ENCODE measurements at regions of chr15 and their contacts with region 1.

Region 1: GRCh38 chr15:31435261-31435911 is 108.8 kb downstream of the KLF13 start:
- DNase-seq: peak; percentile 87
- ATAC-seq: peak; percentile 76
- H3K4me3 ChIP-seq: peak overlapping the region; percentile 21 to 67 (median 41)
- H3K4me3 Mint-ChIP-seq: peak overlapping the region; percentile 85
- H3K27ac ChIP-seq: peak overlapping the region; percentile 52 to 86
- H3K27ac Mint-ChIP-seq: peak overlapping the region; percentile 91
- H3K4me1 ChIP-seq: peaks cover 48 to 52% of the 10 kb centered on the region in 2 donors
- H3K4me1 Mint-ChIP-seq: peaks cover 60% of the 10 kb centered on the region
- H3K27me3 ChIP-seq: no peaks in the 10 kb centered on the region
- H3K27me3 Mint-ChIP-seq: no peaks in the 10 kb centered on the region
- CTCF ChIP-seq: peak; percentile 71

Region 2: GRCh38 chr15:30991255-30992072 is 443.9 kb before region 1 on chr15 and contains the start of gene MTMR10:
- CTCF ChIA-PET with region 1: no interaction called
- POLR2A ChIA-PET with region 1: no interaction called
- intact Hi-C with region 1: loop called (anchors 5 kb)
- DNase-seq: peak; percentile 90
- ATAC-seq: peak; percentile 92
- H3K4me3 ChIP-seq: peak within 1 kb of the TSS; percentile 77 to 96 (median 85)
- H3K4me3 Mint-ChIP-seq: peak within 1 kb of the TSS; percentile 95
- H3K27ac ChIP-seq: peak within 1 kb of the TSS; percentile 81 to 94
- H3K27ac Mint-ChIP-seq: peak within 1 kb of the TSS; percentile 97
- H3K4me1 ChIP-seq: peaks cover 21 to 31% of the 10 kb centered on the region in 2 donors
- H3K4me1 Mint-ChIP-seq: peaks cover 31% of the 10 kb centered on the region
- H3K27me3 ChIP-seq: no peaks in the 10 kb centered on the region
- H3K27me3 Mint-ChIP-seq: no peaks in the 10 kb centered on the region
- CTCF ChIP-seq: no peak
- total RNA-seq, gene MTMR10: 50.2 and 53.2 TPM in 2 replicates

Region 3: DNA sequence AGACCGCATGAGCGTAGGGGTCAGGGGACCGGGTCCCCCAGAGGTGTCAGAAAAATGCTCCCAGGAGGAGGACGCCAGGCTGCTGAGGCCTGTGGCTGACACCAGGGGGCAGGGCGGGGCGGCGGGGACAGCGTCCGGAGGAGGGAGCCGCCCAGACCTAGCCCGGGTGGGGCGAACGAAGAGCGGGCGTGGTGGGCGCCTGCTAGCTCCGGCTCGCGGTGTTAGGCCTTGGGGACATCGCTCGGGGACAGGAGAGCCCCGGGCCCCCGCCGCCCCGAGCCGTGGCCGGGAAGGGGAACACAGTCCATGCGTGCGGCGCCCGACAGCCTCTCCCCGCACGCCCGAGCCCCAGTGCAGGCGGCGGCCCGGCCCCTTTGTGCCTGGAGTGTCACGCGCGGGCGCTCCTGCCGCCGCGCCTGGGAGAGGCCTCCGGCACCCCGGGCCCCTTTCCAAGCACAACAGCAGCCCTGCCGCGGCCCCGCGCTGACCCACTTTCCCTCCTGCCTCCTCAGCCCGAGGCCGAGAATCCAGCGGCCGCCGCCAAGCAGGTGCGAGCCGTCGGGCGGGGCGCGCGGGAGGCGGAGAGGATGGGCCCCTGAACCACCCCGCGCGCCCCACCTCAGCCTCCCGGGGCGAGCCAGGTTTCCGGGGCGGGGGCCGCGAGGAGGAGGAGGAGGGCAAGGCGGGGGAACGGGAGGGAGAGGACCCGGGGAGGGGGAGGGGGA is 219.7 kb before region 1 on chr15:
- CTCF ChIA-PET with region 1: interaction called, 74 read pairs
- POLR2A ChIA-PET with region 1: interaction called, 11 read pairs
- intact Hi-C with region 1: loop called (anchors 1 kb)
- DNase-seq: peak; percentile 90
- ATAC-seq: peak; percentile 82
- H3K4me3 ChIP-seq: peak overlapping the region in 4 of 5 experiments; percentile 35 to 72 (median 66)
- H3K4me3 Mint-ChIP-seq: peak overlapping the region; percentile 87
- H3K27ac ChIP-seq: peak overlapping the region; percentile 66 to 79
- H3K27ac Mint-ChIP-seq: peak overlapping the region; percentile 87
- H3K4me1 ChIP-seq: peaks cover 14 to 25% of the 10 kb centered on the region in 2 donors
- H3K4me1 Mint-ChIP-seq: peaks cover 23% of the 10 kb centered on the region
- H3K27me3 ChIP-seq: no peaks in the 10 kb centered on the region
- H3K27me3 Mint-ChIP-seq: no peaks in the 10 kb centered on the region
- CTCF ChIP-seq: peak; percentile 96

Region 4: DNA sequence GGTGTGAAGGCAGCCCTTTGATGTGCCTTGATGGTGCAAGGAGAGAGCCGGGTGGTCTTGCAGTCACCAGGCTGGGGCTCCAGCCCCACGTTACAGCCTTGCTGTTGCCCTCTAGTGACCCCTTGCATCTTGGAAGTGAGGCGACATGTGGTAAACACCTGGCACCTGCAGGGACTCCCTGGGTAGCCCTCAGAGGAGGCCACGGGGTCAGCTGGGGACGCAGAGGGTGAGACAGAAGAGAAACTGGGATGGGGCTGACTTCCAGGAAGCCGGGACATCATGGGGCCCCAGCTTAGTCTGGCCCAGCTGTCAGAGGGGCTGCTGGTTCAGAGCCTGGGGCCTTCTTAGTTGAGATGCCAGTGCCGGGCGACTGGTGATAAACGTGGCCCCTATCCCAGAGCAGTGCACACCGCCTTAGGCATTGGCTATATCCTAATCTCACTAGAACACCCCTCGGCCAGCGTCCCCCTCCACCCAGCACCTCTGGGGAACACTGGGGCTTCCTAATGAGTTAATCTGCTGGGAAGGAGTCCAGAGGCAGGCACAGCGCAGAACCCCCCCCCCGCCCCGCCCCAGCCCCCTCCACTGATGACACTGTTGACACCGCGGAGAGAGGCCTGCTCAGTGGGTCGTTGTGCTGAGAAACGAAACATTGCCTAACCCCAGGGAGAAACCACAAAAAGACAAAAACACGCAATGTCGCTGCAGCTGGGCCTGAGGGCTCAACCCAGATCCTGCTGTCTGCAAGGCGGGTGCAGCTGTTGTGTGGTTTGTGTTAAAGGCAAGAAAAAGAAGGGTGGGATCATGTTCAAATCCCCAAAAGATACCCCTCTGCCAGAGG is 169.3 kb before region 1 on chr15:
- CTCF ChIA-PET with region 1: interaction called, 52 read pairs
- POLR2A ChIA-PET with region 1: interaction called, 3 read pairs
- intact Hi-C with region 1: loop called (anchors 1 kb)
- DNase-seq: peak; percentile 80
- ATAC-seq: peak; percentile 64
- H3K4me3 ChIP-seq: peak overlapping the region in 4 of 5 experiments; percentile 2 to 37 (median 4)
- H3K4me3 Mint-ChIP-seq: peak overlapping the region; percentile 79
- H3K27ac ChIP-seq: peak overlapping the region; percentile 78 to 90
- H3K27ac Mint-ChIP-seq: peak overlapping the region; percentile 96
- H3K4me1 ChIP-seq: peaks cover 70 to 79% of the 10 kb centered on the region in 2 donors
- H3K4me1 Mint-ChIP-seq: peaks cover 79% of the 10 kb centered on the region
- H3K27me3 ChIP-seq: no peaks in the 10 kb centered on the region
- H3K27me3 Mint-ChIP-seq: no peaks in the 10 kb centered on the region
- CTCF ChIP-seq: no peak

Region 5: GRCh38 chr15:31344823-31345605 is 90.4 kb before region 1 on chr15:
- CTCF ChIA-PET with region 1: interaction called, 19 read pairs
- POLR2A ChIA-PET with region 1: no interaction called
- intact Hi-C with region 1: loop called (anchors 2 kb)
- DNase-seq: no peak
- ATAC-seq: peak; percentile 62
- H3K4me3 ChIP-seq: peak overlapping the region in 4 of 5 experiments; percentile 42 to 70 (median 58)
- H3K4me3 Mint-ChIP-seq: peak overlapping the region; percentile 95
- H3K27ac ChIP-seq: peak overlapping the region; percentile 90 to 97
- H3K27ac Mint-ChIP-seq: peak overlapping the region; percentile 99
- H3K4me1 ChIP-seq: peaks cover 100% of the 10 kb centered on the region in 2 donors
- H3K4me1 Mint-ChIP-seq: peaks cover 99% of the 10 kb centered on the region
- H3K27me3 ChIP-seq: no peaks in the 10 kb centered on the region
- H3K27me3 Mint-ChIP-seq: no peaks in the 10 kb centered on the region
- CTCF ChIP-seq: no peak

Region 6: GRCh38 chr15:31365655-31366127 is 69.7 kb before region 1 on chr15:
- CTCF ChIA-PET with region 1: interaction called, 133 read pairs
- POLR2A ChIA-PET with region 1: interaction called, 8 read pairs
- intact Hi-C with region 1: loop called (anchors 2 kb)
- DNase-seq: peak; percentile 79
- ATAC-seq: peak; percentile 31
- H3K4me3 ChIP-seq: peak overlapping the region in 4 of 5 experiments; percentile 5 to 33 (median 15)
- H3K4me3 Mint-ChIP-seq: peak overlapping the region; percentile 80
- H3K27ac ChIP-seq: no peak overlapping the region
- H3K27ac Mint-ChIP-seq: peak overlapping the region; percentile 93
- H3K4me1 ChIP-seq: peaks cover 85 to 87% of the 10 kb centered on the region in 2 donors
- H3K4me1 Mint-ChIP-seq: peaks cover 95% of the 10 kb centered on the region
- H3K27me3 ChIP-seq: no peaks in the 10 kb centered on the region
- H3K27me3 Mint-ChIP-seq: no peaks in the 10 kb centered on the region
- CTCF ChIP-seq: peak; percentile 59

Region 7: DNA sequence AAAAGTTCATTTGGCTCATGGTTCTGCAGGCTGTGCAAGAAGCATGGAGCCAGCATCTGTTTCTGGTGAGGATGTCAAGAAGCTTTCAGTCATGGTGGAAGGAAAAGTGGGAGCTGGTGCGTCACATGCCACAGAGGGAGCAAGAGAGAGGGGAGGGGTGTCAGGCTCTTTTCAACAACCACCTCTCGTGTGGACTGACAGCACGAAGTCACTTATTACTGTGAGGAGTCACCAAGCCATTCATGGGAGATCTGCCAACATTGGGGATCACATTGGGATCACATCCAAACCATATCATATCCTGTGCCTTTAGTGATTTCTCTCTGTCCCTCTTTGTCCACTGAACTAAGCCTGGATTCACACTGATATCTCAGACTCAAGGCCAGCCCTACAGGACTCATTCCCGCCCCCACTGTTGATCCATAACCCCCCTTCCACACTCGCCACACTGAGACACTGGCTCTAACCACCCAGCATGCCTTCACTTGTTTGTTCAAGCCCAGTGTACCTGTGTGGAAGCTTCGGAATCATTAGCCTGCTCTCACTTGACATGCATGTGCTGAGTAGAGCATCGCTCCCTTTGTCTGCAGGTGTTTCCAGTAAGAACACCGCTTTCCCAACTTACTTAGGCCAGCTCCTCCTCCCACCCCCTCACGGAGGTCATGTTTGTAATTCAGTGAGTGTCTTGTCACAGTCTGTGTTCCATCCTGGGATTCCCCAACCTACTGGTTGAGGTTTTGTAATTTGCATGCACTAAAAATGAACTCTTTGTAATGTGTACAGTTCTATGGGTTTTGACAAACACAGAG is 23.4 kb after region 1 on chr15:
- CTCF ChIA-PET with region 1: interaction called, 32 read pairs
- POLR2A ChIA-PET with region 1: interaction called, 7 read pairs
- intact Hi-C with region 1: loop called (anchors 1 kb)
- DNase-seq: peak; percentile 80
- ATAC-seq: peak; percentile 96
- H3K4me3 ChIP-seq: peak overlapping the region in 3 of 5 experiments; percentile 12 to 37 (median 34)
- H3K4me3 Mint-ChIP-seq: peak overlapping the region; percentile 85
- H3K27ac ChIP-seq: peak overlapping the region; percentile 34 to 47
- H3K27ac Mint-ChIP-seq: peak overlapping the region; percentile 87
- H3K4me1 ChIP-seq: peaks cover 40 to 48% of the 10 kb centered on the region in 2 donors
- H3K4me1 Mint-ChIP-seq: peaks cover 44% of the 10 kb centered on the region
- H3K27me3 ChIP-seq: peaks cover 0 to 3% (median 0%) of the 10 kb centered on the region in 4 experiments
- H3K27me3 Mint-ChIP-seq: peaks cover 4% of the 10 kb centered on the region
- CTCF ChIP-seq: no peak

Measured in B cell (primary cell).